ENCODE measurements at regions of chr16 and their contacts with region 1.

Region 1: DNA sequence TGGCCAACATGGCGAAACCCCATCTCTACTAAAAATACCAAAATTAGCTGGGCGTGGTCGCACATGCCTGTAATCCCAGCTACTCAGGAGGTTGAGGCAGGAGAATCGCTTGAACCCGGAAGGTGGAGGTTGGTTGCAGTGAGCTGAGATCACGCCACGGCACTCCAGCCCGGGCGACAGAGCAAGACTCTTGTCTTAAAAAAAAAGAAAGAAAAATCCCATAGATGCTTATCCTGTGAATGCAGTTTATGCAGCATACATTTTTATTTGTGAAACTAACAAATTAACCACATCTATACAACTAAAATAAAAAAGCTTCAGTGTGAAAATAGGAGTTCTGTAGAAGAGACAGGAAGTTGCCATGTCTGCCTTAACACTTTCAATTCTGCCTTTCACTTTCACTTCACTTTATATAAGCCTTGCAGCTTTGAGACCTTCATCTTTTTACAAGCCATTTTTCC is 7.1 kb downstream of the IGSF6 start:
- DNase-seq: no peak
- H3K4me3 Mint-ChIP-seq: no peak overlapping the region
- H3K27ac Mint-ChIP-seq: no peak overlapping the region
- H3K4me1 Mint-ChIP-seq: no peaks in the 10 kb centered on the region
- H3K27me3 Mint-ChIP-seq: no peaks in the 10 kb centered on the region
- CTCF ChIP-seq: no peak

Region 2: DNA sequence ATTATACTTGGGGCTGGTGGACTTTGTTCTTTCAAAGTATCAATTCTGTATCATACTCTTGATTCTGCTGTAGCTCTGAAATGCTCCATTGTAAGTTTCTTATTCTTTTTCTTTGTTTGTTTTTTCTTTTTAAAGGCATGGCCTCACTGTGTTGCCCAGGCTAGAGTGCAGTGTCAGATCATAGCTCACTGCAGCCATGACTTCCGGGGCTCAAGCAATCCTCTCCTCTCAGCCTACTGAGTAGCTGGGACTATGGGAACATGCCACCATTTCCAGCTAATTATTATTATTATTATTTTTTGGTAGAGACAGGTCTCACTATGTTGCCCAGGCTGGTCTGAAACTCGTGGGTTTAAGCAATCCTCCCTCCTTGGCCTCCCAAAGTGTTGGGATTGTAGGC is 84.8 kb before region 1 on chr16:
- CTCF ChIA-PET with region 1: no interaction called
- intact Hi-C with region 1: no loop called
- DNase-seq: no peak
- H3K4me3 Mint-ChIP-seq: no peak overlapping the region
- H3K27ac Mint-ChIP-seq: no peak overlapping the region
- H3K4me1 Mint-ChIP-seq: no peaks in the 10 kb centered on the region
- H3K27me3 Mint-ChIP-seq: no peaks in the 10 kb centered on the region
- CTCF ChIP-seq: no peak

Region 3: DNA sequence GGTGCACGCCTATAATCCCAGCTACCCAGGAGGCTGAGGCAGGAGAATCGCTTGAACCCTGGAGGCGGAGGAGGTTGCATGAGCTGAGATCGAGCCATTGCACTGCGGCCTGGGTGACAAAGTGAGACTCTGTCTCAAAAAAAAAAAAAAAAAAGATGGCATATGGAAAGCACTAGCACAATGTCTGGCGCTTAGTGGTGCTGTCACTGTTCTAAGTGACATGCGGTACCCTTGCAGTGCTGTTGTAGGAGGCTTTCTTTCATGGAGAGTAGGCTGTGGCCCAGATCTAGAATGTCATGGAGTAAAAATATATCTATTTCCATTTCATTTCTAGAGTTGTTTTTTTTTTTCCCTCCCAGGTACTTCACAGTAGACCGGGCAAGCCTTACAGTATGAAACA is 60.5 kb before region 1 on chr16:
- CTCF ChIA-PET with region 1: interaction called, 12 read pairs
- intact Hi-C with region 1: loop called (anchors 1 kb)
- DNase-seq: no peak
- H3K4me3 Mint-ChIP-seq: no peak overlapping the region
- H3K27ac Mint-ChIP-seq: no peak overlapping the region
- H3K4me1 Mint-ChIP-seq: no peaks in the 10 kb centered on the region
- H3K27me3 Mint-ChIP-seq: no peaks in the 10 kb centered on the region
- CTCF ChIP-seq: no peak

Region 4: GRCh38 chr16:21599233-21600030 is 45.9 kb before region 1 on chr16 and contains the start of gene METTL9:
- CTCF ChIA-PET with region 1: no interaction called
- intact Hi-C with region 1: loop called (anchors 5 kb)
- DNase-seq: peak; percentile 98
- H3K4me3 Mint-ChIP-seq: peak within 1 kb of the TSS; percentile 95
- H3K27ac Mint-ChIP-seq: peak within 1 kb of the TSS; percentile 60
- H3K4me1 Mint-ChIP-seq: peaks cover 30% of the 10 kb centered on the region
- H3K27me3 Mint-ChIP-seq: no peaks in the 10 kb centered on the region
- CTCF ChIP-seq: peak; percentile 16
- total RNA-seq, gene METTL9: 86.5 and 109 TPM in 2 replicates

Region 5: GRCh38 chr16:21666772-21667171 is 21.5 kb after region 1 on chr16:
- CTCF ChIA-PET with region 1: no interaction called
- intact Hi-C with region 1: no loop called
- DNase-seq: no peak
- H3K4me3 Mint-ChIP-seq: no peak overlapping the region
- H3K27ac Mint-ChIP-seq: no peak overlapping the region
- H3K4me1 Mint-ChIP-seq: no peaks in the 10 kb centered on the region
- H3K27me3 Mint-ChIP-seq: peaks cover 27% of the 10 kb centered on the region
- CTCF ChIP-seq: no peak